ENCODE measurements at regions of chr17 and their contacts with region 1.

Region 1: GRCh38 chr17:35540589-35541404 is 3.3 kb upstream of the SLFN12L start:
- DNase-seq: peak; percentile 52
- H3K4me3 Mint-ChIP-seq: peak overlapping the region; percentile 81
- H3K27ac Mint-ChIP-seq: peak overlapping the region; percentile 100
- H3K4me1 Mint-ChIP-seq: peaks cover 62% of the 10 kb centered on the region
- H3K27me3 Mint-ChIP-seq: no peaks in the 10 kb centered on the region

Region 2: DNA sequence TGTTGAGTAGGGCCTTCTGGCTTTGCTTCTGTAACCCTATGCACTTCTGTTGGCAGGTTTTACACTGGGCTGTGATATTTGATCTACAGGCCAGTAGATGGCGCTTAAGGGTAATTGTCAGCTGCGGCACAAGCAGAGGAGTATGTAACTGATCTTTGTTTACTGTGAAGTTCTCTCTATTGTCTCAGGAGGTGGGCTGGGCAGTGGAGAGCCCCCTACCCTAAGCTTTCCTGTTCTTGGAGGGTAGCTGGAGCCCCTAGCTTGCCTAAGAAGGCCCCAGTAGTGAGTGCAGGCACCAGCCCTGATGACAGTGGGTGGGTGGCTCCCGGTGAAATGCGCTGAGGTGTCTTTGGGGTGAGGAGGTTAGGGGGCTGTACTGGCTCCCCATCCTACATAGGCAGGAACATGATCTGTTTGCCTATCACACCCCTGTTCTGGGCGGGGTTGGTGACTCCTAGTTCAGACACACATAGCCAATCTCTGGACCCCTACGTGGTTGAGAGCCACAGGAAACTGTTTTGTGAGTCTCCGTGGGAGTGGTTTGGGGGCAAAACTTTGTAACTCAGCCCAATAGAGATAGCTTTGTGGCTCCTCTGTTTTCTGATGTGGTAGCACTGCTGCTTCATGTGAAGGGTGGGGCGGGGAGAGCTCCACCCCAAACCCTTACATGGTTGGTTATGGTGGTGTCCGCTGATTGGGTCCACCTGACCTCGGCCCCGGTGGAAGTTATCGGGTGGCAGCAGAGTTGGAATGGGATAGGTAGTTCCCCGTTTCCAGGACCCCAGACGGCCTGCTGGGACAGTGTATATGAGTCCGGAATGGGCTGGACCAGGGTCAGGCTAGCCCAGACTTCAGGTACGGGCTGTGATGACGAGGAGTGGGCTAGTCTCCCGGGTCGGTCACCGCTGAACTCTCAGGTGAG is 227.7 kb before region 1 on chr17:
- CTCF ChIA-PET with region 1: interaction called, 86 read pairs
- DNase-seq: peak; percentile 89
- H3K4me3 Mint-ChIP-seq: peak overlapping the region; percentile 82
- H3K27ac Mint-ChIP-seq: peak overlapping the region; percentile 95
- H3K4me1 Mint-ChIP-seq: peaks cover 43% of the 10 kb centered on the region
- H3K27me3 Mint-ChIP-seq: peaks cover 13% of the 10 kb centered on the region

Region 3: DNA sequence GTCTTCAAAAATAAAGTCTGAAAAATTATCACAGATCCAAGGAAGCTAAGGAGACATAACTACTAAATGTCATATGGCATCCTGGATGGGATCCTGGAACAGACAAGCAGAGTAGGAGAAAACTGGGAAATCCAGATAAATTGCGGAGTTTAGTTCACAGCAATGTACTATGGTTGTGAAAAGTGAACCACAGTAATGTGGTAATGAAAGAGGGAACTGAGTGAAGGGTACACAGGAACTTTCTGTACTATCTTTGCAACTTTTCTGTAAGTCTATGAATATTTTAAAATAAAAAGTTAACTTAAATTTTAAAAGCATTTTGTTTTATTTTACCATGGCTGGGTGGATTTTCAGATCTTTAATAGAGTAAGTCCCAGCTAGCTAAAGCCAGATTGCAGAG is 19.6 kb before region 1 on chr17:
- CTCF ChIA-PET with region 1: interaction called, 26 read pairs
- DNase-seq: no peak
- H3K4me3 Mint-ChIP-seq: peak overlapping the region; percentile 31
- H3K27ac Mint-ChIP-seq: peak overlapping the region; percentile 83
- H3K4me1 Mint-ChIP-seq: peaks cover 96% of the 10 kb centered on the region
- H3K27me3 Mint-ChIP-seq: no peaks in the 10 kb centered on the region